A673 (cell line): ENCODE measurements at regions of chr1 and their contacts with region 1.

Region 1: DNA sequence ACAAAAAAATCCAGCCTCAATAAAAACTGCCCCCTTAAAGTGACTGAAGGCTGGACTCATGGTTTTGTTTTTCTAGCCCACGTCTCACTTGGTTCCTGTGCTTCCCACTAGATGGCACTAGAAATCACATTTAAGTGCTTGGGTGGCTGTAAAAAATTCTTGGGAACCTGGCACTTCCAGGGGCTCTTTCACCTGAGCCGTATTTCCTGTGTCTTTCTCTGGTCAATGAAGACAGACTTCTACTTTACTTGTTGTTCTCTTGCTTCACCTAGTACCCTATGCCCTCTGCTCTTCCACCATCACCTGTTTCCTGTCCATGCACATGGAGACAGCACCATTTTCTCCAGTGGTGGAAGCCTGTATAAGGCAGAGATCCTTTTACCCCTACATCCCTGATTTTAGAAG is 20.0 kb downstream of the METTL13 start:
- DNase-seq: peak; percentile 53
- H3K4me3 ChIP-seq: no peak overlapping the region
- H3K27ac ChIP-seq: no peak overlapping the region
- H3K4me1 ChIP-seq: no peaks in the 10 kb centered on the region
- H3K27me3 ChIP-seq: no peaks in the 10 kb centered on the region
- CTCF ChIP-seq: peak; percentile 81

Region 2: GRCh38 chr1:171457412-171457811 is 344.1 kb before region 1 on chr1:
- CTCF ChIA-PET with region 1: no interaction called
- POLR2A ChIA-PET with region 1: no interaction called
- intact Hi-C with region 1: no loop called
- DNase-seq: no peak
- H3K4me3 ChIP-seq: no peak overlapping the region
- H3K27ac ChIP-seq: no peak overlapping the region
- H3K4me1 ChIP-seq: no peaks in the 10 kb centered on the region
- H3K27me3 ChIP-seq: no peaks in the 10 kb centered on the region
- CTCF ChIP-seq: no peak

Region 3: DNA sequence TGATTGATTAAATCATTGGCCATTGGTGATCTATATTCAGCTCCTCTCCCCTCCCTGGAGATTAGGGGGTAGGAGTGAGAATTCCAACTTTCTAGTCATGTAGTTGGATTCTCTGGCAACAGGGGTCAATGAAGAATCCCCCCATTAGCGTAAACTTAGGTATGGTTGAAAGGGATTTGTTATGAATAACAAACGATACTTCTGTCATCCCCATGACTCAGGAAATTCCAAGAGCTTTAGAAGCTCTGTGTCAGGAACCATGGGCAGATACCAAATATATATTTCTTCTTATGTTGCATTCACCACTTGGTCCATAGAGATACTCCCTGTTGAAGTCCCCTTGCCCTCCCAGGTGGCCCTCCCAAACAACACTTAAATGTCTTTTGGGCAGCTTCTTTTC is 164.3 kb after region 1 on chr1:
- CTCF ChIA-PET with region 1: no interaction called
- POLR2A ChIA-PET with region 1: no interaction called
- intact Hi-C with region 1: loop called (anchors 5 kb)
- DNase-seq: no peak
- H3K4me3 ChIP-seq: no peak overlapping the region
- H3K27ac ChIP-seq: no peak overlapping the region
- H3K4me1 ChIP-seq: no peaks in the 10 kb centered on the region
- H3K27me3 ChIP-seq: no peaks in the 10 kb centered on the region
- CTCF ChIP-seq: no peak

Region 4: DNA sequence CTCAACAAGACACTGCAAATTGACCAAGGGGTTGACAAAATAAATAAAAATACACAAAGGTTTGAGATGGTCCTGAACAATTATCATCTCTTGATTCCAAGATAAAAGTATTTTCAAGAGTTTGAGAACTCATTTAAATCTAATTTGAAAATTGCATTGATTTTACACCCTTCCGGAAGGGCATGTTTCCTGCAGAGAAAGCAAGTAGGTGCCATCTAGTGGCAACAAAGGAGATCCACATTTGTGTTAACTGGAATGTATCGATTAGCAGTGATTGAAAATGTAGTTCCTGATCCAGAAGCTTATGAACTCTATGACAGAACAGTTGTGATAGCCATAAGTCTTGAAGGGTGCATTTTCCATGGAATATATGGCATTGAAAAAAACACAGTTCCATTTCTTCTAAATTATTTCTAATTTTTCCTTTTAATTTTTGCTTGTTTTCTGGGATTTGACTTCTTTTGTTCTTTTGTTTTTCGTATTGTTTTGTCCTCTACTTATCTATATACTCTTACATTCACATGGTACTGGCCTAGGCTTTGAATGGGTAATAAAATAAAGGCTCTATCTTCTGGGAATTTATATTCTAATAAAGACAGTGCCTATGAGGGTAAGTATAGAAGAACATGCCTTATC is 183.5 kb after region 1 on chr1:
- CTCF ChIA-PET with region 1: interaction called, 28 read pairs
- POLR2A ChIA-PET with region 1: no interaction called
- intact Hi-C with region 1: loop called (anchors 1 kb)
- DNase-seq: peak; percentile 60
- H3K4me3 ChIP-seq: no peak overlapping the region
- H3K27ac ChIP-seq: no peak overlapping the region
- H3K4me1 ChIP-seq: no peaks in the 10 kb centered on the region
- H3K27me3 ChIP-seq: no peaks in the 10 kb centered on the region
- CTCF ChIP-seq: peak; percentile 87

Region 5: GRCh38 chr1:172024516-172024915 is 223.0 kb after region 1 on chr1:
- CTCF ChIA-PET with region 1: no interaction called
- POLR2A ChIA-PET with region 1: no interaction called
- intact Hi-C with region 1: no loop called
- DNase-seq: no peak
- H3K4me3 ChIP-seq: no peak overlapping the region
- H3K27ac ChIP-seq: no peak overlapping the region
- H3K4me1 ChIP-seq: no peaks in the 10 kb centered on the region
- H3K27me3 ChIP-seq: no peaks in the 10 kb centered on the region
- CTCF ChIP-seq: no peak